ENCODE measurements at regions of chr9 and their contacts with region 1.

Region 1: GRCh38 chr9:93453047-93453914 is at the start of gene FAM120AOS:
- DNase-seq: peak; percentile 87 to 95
- ATAC-seq: peak; percentile 83 to 95 (median 90)
- H3K4me3 ChIP-seq: peak within 1 kb of the TSS; percentile 74 to 99 (median 90)
- H3K27ac ChIP-seq: peak within 1 kb of the TSS; percentile 87 to 99 (median 96)
- H3K4me1 ChIP-seq: peaks cover 8 to 71% (median 55%) of the 10 kb centered on the region in 9 donors
- H3K27me3 ChIP-seq: no peaks in the 10 kb centered on the region
- CTCF ChIP-seq: no peak
- total RNA-seq, gene FAM120AOS: 28.8 to 39.9 (median 33.2) TPM

Region 2: GRCh38 chr9:93134015-93134739 is 319.1 kb before region 1 on chr9 and contains the start of gene NINJ1:
- intact Hi-C with region 1: loop called in 2 of 10 experiments (anchors 10 kb)
- DNase-seq: peak; percentile 70 to 78
- ATAC-seq: peak; percentile 74 to 92 (median 82)
- H3K4me3 ChIP-seq: peak within 1 kb of the TSS; percentile 57 to 97 (median 81)
- H3K27ac ChIP-seq: peak within 1 kb of the TSS; percentile 74 to 99 (median 94)
- H3K4me1 ChIP-seq: peaks cover 33 to 59% (median 52%) of the 10 kb centered on the region in 9 donors
- H3K27me3 ChIP-seq: no peaks in the 10 kb centered on the region
- CTCF ChIP-seq: peak in 1 of 9 donors; percentile 12
- total RNA-seq, gene NINJ1: 35.5 to 77.1 (median 41.3) TPM

Region 3: GRCh38 chr9:93531374-93531773 is 78.1 kb after region 1 on chr9:
- intact Hi-C with region 1: loop called in 3 of 10 experiments (anchors 5 to 10 kb)
- DNase-seq: no peak
- ATAC-seq: peak in 1 of 8 donors; percentile 40
- H3K4me3 ChIP-seq: no peak overlapping the region
- H3K27ac ChIP-seq: no peak overlapping the region
- H3K4me1 ChIP-seq: peaks cover 0 to 16% (median 5%) of the 10 kb centered on the region in 9 donors
- H3K27me3 ChIP-seq: no peaks in the 10 kb centered on the region
- CTCF ChIP-seq: peak in 2 of 9 donors; percentile 10 to 13

Region 4: GRCh38 chr9:93549611-93550010 is 96.3 kb after region 1 on chr9:
- intact Hi-C with region 1: loop called in 2 of 10 experiments (anchors 10 kb)
- DNase-seq: no peak
- ATAC-seq: peak in 2 of 8 donors; percentile 63 to 68
- H3K4me3 ChIP-seq: no peak overlapping the region
- H3K27ac ChIP-seq: peak overlapping the region in 2 of 10 donors; percentile 25 to 42
- H3K4me1 ChIP-seq: peaks cover 0 to 17% (median 0%) of the 10 kb centered on the region in 9 donors
- H3K27me3 ChIP-seq: no peaks in the 10 kb centered on the region
- CTCF ChIP-seq: no peak

Region 5: GRCh38 chr9:94726495-94727191 is 1273.4 kb after region 1 on chr9 and contains the start of gene AOPEP:
- intact Hi-C with region 1: no loop called
- DNase-seq: peak; percentile 98 to 99
- ATAC-seq: peak; percentile 99 to 100 (median 100)
- H3K4me3 ChIP-seq: peak within 1 kb of the TSS; percentile 69 to 94 (median 86)
- H3K27ac ChIP-seq: peak within 1 kb of the TSS in 9 of 10 donors; percentile 79 to 92 (median 89)
- H3K4me1 ChIP-seq: peaks cover 0 to 15% (median 8%) of the 10 kb centered on the region in 9 donors
- H3K27me3 ChIP-seq: no peaks in the 10 kb centered on the region
- CTCF ChIP-seq: no peak
- total RNA-seq, gene AOPEP: 133 to 250 (median 161) TPM

Measured in heart right ventricle (tissue), 16 donors.